Gastrocnemius medialis (tissue), 4 donors: ENCODE measurements at regions of chr3 and their contacts with region 1.

Region 1: GRCh38 chr3:28901018-28901417 is 379.9 kb upstream of the RBMS3 start:
- DNase-seq: no peak
- ATAC-seq: no peak
- H3K4me3 ChIP-seq: no peak overlapping the region
- H3K27ac ChIP-seq: no peak overlapping the region
- H3K4me1 ChIP-seq: peaks cover 0 to 9% of the 10 kb centered on the region in 2 donors
- H3K27me3 ChIP-seq: no peaks in the 10 kb centered on the region
- CTCF ChIP-seq: no peak
- POLR2A ChIP-seq: no peak

Region 2: GRCh38 chr3:28726840-28727239 is 174.2 kb before region 1 on chr3:
- in situ Hi-C with region 1: no loop called
- intact Hi-C with region 1: no loop called
- DNase-seq: peak; percentile 12 to 50
- ATAC-seq: peak; percentile 74 to 78
- H3K4me3 ChIP-seq: no peak overlapping the region
- H3K27ac ChIP-seq: no peak overlapping the region
- H3K4me1 ChIP-seq: peaks cover 0 to 12% of the 10 kb centered on the region in 2 donors
- H3K27me3 ChIP-seq: no peaks in the 10 kb centered on the region
- CTCF ChIP-seq: peak; percentile 28 to 59 (median 48)
- POLR2A ChIP-seq: no peak

Region 3: DNA sequence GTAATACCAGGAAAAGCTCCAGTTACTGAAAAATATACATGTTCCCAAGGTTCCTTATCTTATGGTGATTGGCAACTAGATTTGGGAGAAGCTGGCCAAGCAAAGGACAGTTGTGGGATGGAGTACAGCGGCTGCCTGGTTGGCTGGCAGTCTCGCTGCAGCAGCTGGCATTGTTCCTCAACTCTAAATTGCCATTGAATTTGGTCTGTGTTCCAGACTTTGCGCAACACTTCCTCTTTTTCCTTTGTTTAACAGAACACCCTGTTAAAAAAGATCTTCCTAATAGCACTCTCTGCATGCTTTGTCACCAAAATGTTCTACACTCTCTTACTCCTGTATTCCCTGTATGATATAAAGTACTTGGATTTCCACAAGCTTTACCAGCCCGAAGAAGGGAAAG is 40.7 kb before region 1 on chr3:
- in situ Hi-C with region 1: no loop called
- intact Hi-C with region 1: loop called (anchors 1 kb)
- DNase-seq: peak; percentile 23 to 31
- ATAC-seq: peak; percentile 34 to 61
- H3K4me3 ChIP-seq: peak overlapping the region in 1 of 4 donors; percentile 8
- H3K27ac ChIP-seq: peak overlapping the region in 2 of 4 donors; percentile 21 to 55
- H3K4me1 ChIP-seq: peaks cover 28% of the 10 kb centered on the region in 2 donors
- H3K27me3 ChIP-seq: no peaks in the 10 kb centered on the region
- CTCF ChIP-seq: no peak
- POLR2A ChIP-seq: no peak